Sciatic nerve (tissue), 2 donors: ENCODE measurements at regions of chr16 and their contacts with region 1.

Region 1: DNA sequence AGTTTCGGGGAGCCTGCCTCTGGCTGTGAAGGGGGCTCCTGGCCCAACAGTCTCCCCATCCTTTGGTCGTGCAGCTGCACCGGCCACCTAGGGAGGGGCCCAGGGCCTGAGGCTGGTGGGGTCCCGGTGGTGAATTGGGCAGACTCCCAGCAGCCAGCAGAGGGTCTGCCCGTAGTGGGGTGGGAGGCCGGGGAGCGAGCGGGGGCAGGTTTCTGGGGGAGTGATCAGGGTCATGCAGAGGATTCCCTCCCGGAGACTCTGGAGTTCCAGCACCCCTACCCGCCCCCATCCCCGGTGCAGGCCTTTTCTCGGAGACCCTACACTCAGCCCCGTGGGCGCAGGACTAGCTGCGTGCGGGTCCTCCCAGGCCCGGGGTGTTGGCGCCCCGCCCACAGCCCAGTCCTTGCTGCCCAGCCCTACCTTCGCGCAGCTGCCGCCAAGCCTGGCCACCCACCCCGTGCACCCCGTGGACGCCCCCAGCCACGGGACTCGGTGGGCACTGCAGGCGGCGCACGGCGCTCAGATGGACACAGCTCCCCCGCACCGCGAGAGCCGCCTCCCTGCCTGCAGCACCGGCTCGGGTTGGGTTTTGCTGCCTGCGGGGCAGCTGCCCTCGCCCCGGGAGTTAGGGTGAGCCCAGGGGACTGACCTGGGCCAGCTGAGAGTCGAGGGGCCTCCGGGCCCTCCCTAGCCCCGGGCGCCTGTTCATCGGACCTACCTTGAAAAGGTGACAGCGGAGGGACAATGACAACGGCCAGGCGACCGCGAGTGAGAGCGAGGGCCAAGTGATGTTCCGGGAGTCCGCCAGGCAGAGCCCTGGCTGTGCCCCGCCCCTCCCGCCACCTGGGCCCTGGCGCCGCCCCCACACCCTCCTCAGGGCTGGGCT is at the start of gene GNG13:
- DNase-seq: no peak
- ATAC-seq: no peak
- total RNA-seq, gene GNG13: not detected

Region 2: DNA sequence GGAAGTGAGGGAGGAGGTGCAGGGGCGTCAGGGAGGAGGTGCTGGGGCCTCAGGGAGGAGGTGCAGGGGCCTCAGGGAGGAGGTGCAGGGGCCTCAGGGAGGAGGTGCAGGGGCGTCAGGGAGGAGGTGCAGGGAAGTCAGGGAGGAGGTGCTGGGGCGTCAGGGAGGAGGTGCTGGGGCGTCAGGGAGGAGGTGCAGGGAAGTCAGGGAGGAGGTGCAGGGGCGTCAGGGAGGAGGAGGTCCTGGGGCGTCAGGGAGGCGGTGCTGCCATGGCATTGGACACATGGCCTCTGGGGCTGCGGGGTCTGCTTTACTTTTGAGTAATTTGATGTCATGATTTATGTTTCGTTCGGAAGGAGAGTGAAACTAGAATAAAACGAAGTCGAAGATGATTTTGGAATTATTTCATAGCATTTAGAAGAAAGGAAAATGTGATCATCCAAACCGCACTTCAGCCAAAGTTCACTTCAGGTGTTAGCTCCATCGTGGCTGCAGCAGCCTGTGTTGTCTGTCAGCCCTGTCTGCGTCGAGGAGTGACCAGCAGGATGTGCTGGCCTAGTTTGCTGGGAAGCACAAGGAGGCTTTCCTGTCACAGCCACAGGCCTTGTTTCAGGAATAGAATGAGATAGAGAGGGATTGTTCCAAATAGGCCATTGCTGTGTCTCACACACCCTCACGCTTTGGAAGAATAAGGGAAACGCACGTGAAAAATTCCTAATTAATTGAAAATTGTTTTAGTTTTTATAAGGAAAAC is 331.9 kb before region 1 on chr16:
- intact Hi-C with region 1: no loop called
- DNase-seq: no peak
- ATAC-seq: no peak

Region 3: DNA sequence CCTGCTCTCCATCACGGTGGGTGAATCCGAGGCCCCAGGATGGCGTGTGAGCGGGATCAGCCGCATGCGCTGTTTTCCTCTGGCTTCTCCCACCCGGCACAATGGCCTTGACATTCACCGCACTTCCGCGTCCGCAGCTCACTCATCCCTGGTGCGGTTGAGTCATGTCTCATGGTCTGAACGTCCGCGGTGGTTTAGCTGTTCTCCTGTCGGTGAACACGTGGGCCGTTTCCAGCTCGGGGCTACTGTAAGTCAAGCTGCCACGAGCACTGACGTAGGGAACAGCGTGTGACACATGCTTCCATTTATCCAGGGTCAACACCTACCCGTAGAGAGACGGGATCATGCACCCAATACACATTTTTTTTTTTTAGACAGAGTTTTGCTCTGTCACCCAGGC is 337.4 kb after region 1 on chr16:
- intact Hi-C with region 1: no loop called
- DNase-seq: no peak
- ATAC-seq: no peak

Region 4: GRCh38 chr16:1769404-1770300 is 969.5 kb after region 1 on chr16:
- intact Hi-C with region 1: loop called (anchors 5 kb)
- DNase-seq: no peak
- ATAC-seq: peak; percentile 1